ENCODE measurements at regions of chr11 and their contacts with region 1.

Region 1: GRCh38 chr11:3412837-3413236 is 33.9 kb upstream of the ZNF195 start:
- DNase-seq: no peak
- H3K4me3 ChIP-seq: no peak overlapping the region
- H3K4me3 Mint-ChIP-seq: no peak overlapping the region
- H3K27ac ChIP-seq: no peak overlapping the region
- H3K27ac Mint-ChIP-seq: no peak overlapping the region
- H3K4me1 ChIP-seq: no peaks in the 10 kb centered on the region
- H3K4me1 Mint-ChIP-seq: peaks cover 4% of the 10 kb centered on the region
- H3K27me3 ChIP-seq: no peaks in the 10 kb centered on the region
- H3K27me3 Mint-ChIP-seq: peaks cover 3 to 9% (median 3%) of the 10 kb centered on the region in 3 donors
- CTCF ChIP-seq: no peak

Region 2: GRCh38 chr11:3341298-3341697 is 71.5 kb before region 1 on chr11:
- intact Hi-C with region 1: loop called in 1 of 2 experiments (anchors 10 kb)
- DNase-seq: peak; percentile 15 to 29 (median 22)
- H3K4me3 ChIP-seq: no peak overlapping the region
- H3K4me3 Mint-ChIP-seq: peak overlapping the region in 1 of 2 donors; percentile 13
- H3K27ac ChIP-seq: no peak overlapping the region
- H3K27ac Mint-ChIP-seq: no peak overlapping the region
- H3K4me1 ChIP-seq: no peaks in the 10 kb centered on the region
- H3K4me1 Mint-ChIP-seq: no peaks in the 10 kb centered on the region
- H3K27me3 ChIP-seq: peaks cover 6 to 22% of the 10 kb centered on the region in 2 donors
- H3K27me3 Mint-ChIP-seq: peaks cover 20 to 41% (median 24%) of the 10 kb centered on the region in 3 donors
- CTCF ChIP-seq: peak; percentile 82

Region 3: GRCh38 chr11:3359092-3359824 is 53.6 kb before region 1 on chr11:
- intact Hi-C with region 1: loop called in 1 of 2 experiments (anchors 10 kb)
- DNase-seq: no peak
- H3K4me3 ChIP-seq: peak overlapping the region in 1 of 3 experiments; percentile 49
- H3K4me3 Mint-ChIP-seq: no peak overlapping the region
- H3K27ac ChIP-seq: no peak overlapping the region
- H3K27ac Mint-ChIP-seq: no peak overlapping the region
- H3K4me1 ChIP-seq: no peaks in the 10 kb centered on the region
- H3K4me1 Mint-ChIP-seq: no peaks in the 10 kb centered on the region
- H3K27me3 ChIP-seq: no peaks in the 10 kb centered on the region
- H3K27me3 Mint-ChIP-seq: peaks cover 0 to 5% (median 0%) of the 10 kb centered on the region in 3 donors
- CTCF ChIP-seq: no peak